Left cardiac atrium (tissue), 4 donors: ENCODE measurements at regions of chr6 and their contacts with region 1.

Region 1: DNA sequence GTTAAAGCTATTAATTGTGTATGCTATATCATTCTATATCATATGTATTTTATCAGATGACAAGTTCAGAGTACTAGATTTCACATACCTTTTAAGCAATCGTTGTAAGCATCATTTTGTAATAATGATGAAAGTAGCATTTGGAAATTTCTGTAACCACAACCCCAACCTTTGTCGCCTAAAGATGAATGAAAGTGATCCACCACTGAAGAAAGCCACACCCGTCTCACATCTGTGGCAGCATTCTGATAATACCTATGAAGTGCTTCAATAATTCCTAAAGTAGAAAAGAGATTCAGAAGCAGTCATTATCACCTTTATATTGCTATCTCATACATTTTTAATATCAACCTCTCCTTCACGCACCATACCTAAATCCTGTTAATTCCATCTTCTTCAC is 16.6 kb downstream of the ZUP1 start:
- DNase-seq: no peak
- ATAC-seq: no peak

Region 2: GRCh38 chr6:116605935-116606334 is 46.0 kb before region 1 on chr6:
- intact Hi-C with region 1: loop called in 1 of 2 experiments (anchors 10 kb)
- DNase-seq: no peak
- ATAC-seq: no peak

Region 3: GRCh38 chr6:116667623-116668022 is 15.7 kb after region 1 on chr6:
- intact Hi-C with region 1: no loop called
- DNase-seq: no peak
- ATAC-seq: no peak